ENCODE measurements at regions of chr19 and their contacts with region 1.

Region 1: DNA sequence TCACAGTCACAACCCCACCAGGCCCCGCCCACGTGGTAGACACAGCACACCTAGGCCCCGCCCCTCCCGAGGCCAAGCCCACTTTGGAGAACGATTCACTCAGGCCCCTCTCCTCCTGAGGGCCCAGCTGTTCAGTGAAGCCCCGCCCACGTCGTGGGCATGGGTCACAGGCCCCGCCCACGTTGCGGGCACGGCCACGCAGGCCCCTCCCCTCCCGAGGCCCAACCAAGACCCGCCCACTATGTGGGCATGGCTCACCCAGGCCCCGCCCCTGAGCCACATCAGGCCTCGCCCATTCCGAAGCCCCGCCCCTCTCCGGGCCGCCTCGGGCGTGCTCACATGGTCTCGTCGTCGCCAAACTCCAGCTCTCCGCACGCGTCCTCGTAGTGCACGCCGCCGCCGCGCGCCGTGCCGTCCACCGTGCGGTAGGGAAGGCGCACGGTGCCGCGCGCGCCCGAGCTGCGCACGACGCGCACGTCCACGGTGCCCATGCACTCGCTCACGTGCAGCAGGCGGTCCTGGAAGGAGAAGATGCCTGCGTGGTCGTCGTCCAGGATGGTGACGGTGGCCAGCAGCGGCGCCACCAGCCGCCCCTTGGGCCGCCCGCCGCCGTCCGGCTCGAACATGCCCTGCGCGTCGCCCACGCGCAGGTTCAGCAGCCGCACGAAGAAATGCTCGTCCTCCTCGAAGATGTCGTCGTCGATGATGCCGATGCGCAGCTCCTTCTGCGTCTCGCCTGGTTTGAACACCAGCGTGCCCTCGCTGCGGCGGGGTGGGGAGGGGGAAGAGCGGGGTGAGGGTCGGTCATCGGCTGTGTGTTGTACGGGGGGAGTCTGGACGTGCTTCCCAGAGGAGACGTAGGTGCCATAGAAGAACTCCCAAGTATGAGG is 24.0 kb downstream of the SLC8A2 start:
- DNase-seq: peak; percentile 79
- H3K4me3 ChIP-seq: peak overlapping the region; percentile 19
- H3K27ac ChIP-seq: no peak overlapping the region
- H3K4me1 ChIP-seq: peaks cover 17% of the 10 kb centered on the region
- H3K27me3 ChIP-seq: peaks cover 7% of the 10 kb centered on the region
- CTCF ChIP-seq: no peak

Region 2: GRCh38 chr19:47370045-47370611 is 77.6 kb before region 1 on chr19:
- CTCF ChIA-PET with region 1: interaction called, 14 read pairs
- POLR2A ChIA-PET with region 1: no interaction called
- intact Hi-C with region 1: no loop called
- DNase-seq: peak; percentile 45
- H3K4me3 ChIP-seq: no peak overlapping the region
- H3K27ac ChIP-seq: no peak overlapping the region
- H3K4me1 ChIP-seq: no peaks in the 10 kb centered on the region
- H3K27me3 ChIP-seq: no peaks in the 10 kb centered on the region
- CTCF ChIP-seq: no peak